ENCODE measurements at regions of chr14 and their contacts with region 1.

Region 1: DNA sequence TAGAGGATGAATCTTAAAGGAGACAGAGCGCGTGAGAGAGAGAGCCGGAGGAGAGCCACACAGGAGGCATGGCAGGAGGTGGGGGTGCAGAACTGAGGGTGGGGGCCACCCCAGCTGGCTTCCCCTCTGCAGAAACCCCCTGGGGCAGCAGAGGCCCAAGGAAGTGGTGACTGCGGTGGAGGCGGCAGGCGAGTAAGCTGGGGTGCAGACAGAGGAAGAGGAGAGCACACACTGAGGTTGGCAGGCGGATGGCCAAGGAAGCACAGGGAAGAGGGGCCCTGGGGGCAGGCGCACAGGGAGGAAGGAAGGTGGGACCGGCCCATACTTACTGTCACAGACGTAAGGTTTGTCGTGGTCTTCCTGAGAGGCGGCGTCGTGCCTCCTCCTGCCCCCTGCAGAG is 179.8 kb downstream of the DPF3 start:
- DNase-seq: no peak
- H3K4me3 ChIP-seq: no peak overlapping the region
- H3K27ac ChIP-seq: peak overlapping the region in 1 of 4 donors; percentile 67
- H3K4me1 ChIP-seq: peaks cover 25 to 53% (median 31%) of the 10 kb centered on the region in 4 donors
- H3K27me3 ChIP-seq: no peaks in the 10 kb centered on the region
- CTCF ChIP-seq: no peak
- EP300 ChIP-seq: no peak
- POLR2A ChIP-seq: no peak

Region 2: DNA sequence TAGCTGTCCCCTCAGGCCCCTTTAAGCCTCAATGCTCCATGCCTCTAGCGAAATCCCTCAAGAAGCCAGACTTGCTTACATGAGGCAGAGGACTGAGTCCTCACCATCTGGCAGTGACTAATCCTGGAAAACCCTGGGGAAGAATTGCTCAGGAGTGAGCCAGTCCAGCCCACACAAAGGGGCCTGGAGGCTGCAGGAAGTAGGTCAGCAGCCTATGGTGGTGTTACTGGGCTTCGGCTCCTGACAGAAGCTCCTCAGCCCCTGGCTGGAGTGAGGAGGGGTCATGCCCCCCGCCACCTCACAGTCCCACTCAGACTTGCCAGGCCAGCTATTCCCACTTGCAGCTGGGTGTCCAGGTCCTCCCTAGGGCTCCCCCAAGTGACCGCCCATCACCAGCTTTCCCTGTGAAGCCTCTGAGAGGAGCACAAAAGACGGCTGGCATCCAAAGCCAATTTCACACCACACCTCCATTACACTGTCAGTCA is 70.7 kb before region 1 on chr14:
- intact Hi-C with region 1: no loop called
- DNase-seq: no peak
- H3K4me3 ChIP-seq: no peak overlapping the region
- H3K27ac ChIP-seq: no peak overlapping the region
- H3K4me1 ChIP-seq: peaks cover 0 to 8% (median 6%) of the 10 kb centered on the region in 4 donors
- H3K27me3 ChIP-seq: no peaks in the 10 kb centered on the region
- CTCF ChIP-seq: no peak
- EP300 ChIP-seq: no peak
- POLR2A ChIP-seq: no peak

Region 3: GRCh38 chr14:72801381-72801812 is 87.3 kb after region 1 on chr14:
- intact Hi-C with region 1: loop called (anchors 10 kb)
- DNase-seq: no peak
- H3K4me3 ChIP-seq: no peak overlapping the region
- H3K27ac ChIP-seq: peak overlapping the region in 3 of 4 donors; percentile 10 to 65 (median 49)
- H3K4me1 ChIP-seq: peaks cover 9 to 31% (median 19%) of the 10 kb centered on the region in 4 donors
- H3K27me3 ChIP-seq: no peaks in the 10 kb centered on the region
- CTCF ChIP-seq: no peak
- EP300 ChIP-seq: no peak
- POLR2A ChIP-seq: no peak

Region 4: DNA sequence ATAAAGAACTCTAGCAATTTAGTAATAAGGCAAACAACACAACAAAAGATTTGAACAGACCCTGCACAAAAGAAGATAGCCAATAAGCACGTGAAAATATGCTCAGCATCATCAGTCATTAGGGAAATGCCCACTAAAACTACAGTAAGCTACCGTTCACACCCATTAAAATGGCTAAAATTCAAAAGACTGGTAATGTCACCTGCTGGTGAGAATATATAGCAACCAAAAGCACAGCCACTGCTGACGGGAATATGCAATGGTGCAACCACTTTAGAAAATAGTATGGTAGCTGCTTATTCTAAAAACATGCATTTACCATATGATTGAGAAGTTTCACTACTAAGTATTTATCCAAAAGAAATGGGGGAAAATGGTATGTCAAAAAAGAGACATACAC is 104.9 kb after region 1 on chr14:
- intact Hi-C with region 1: no loop called
- DNase-seq: no peak
- H3K4me3 ChIP-seq: no peak overlapping the region
- H3K27ac ChIP-seq: no peak overlapping the region
- H3K4me1 ChIP-seq: peaks cover 0 to 1% (median 0%) of the 10 kb centered on the region in 4 donors
- H3K27me3 ChIP-seq: no peaks in the 10 kb centered on the region
- CTCF ChIP-seq: no peak
- EP300 ChIP-seq: no peak
- POLR2A ChIP-seq: no peak

Region 5: GRCh38 chr14:72893636-72894321 is 179.7 kb after region 1 on chr14 and contains the start of gene DPF3:
- intact Hi-C with region 1: loop called (anchors 10 kb)
- DNase-seq: peak; percentile 99
- H3K4me3 ChIP-seq: peak within 1 kb of the TSS; percentile 77 to 85 (median 83)
- H3K27ac ChIP-seq: peak within 1 kb of the TSS; percentile 49 to 76 (median 70)
- H3K4me1 ChIP-seq: peaks cover 21 to 41% (median 32%) of the 10 kb centered on the region in 4 donors
- H3K27me3 ChIP-seq: peaks cover 0 to 47% (median 6%) of the 10 kb centered on the region in 4 donors
- CTCF ChIP-seq: no peak
- EP300 ChIP-seq: no peak
- POLR2A ChIP-seq: no peak
- total RNA-seq, gene DPF3: 0.78 to 2.5 (median 1.7) TPM

Region 6: DNA sequence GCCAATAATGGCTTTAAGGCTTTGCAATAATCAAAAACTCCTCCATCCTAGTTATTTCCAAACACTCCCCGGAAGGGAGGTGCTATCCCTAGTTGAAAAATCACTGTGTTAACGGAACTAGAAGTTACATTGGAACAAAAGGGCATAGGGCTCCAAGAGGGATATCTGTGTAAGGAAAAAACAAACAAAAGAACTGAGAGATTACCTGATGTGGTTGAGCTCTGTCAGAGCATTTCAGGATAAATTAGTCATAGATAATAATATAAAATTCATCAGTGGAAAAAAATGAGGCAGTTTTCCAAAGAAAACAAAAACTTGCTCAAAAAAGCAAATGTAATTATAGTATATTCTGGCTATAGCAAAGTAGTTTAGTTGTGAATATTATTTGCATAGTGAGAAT is 495.9 kb after region 1 on chr14:
- intact Hi-C with region 1: no loop called
- DNase-seq: no peak
- H3K4me3 ChIP-seq: no peak overlapping the region
- H3K27ac ChIP-seq: no peak overlapping the region
- H3K4me1 ChIP-seq: peaks cover 0 to 16% (median 12%) of the 10 kb centered on the region in 4 donors
- H3K27me3 ChIP-seq: no peaks in the 10 kb centered on the region
- CTCF ChIP-seq: no peak
- EP300 ChIP-seq: no peak
- POLR2A ChIP-seq: no peak

Measured in esophagus muscularis mucosa (tissue), 4 donors.